ENCODE measurements at regions of chr19 and their contacts with region 1.

Region 1: GRCh38 chr19:46990991-46991676 is 28.5 kb upstream of the NPAS1 start:
- DNase-seq: peak; percentile 88
- H3K4me3 Mint-ChIP-seq: no peak overlapping the region
- H3K27ac Mint-ChIP-seq: peak overlapping the region; percentile 19
- H3K4me1 Mint-ChIP-seq: no peaks in the 10 kb centered on the region
- H3K27me3 Mint-ChIP-seq: no peaks in the 10 kb centered on the region
- CTCF ChIP-seq: peak; percentile 89

Region 2: GRCh38 chr19:46753420-46754155 is 237.5 kb before region 1 on chr19:
- CTCF ChIA-PET with region 1: interaction called, 5 read pairs
- POLR2A ChIA-PET with region 1: no interaction called
- intact Hi-C with region 1: loop called (anchors 2 kb)
- DNase-seq: peak; percentile 69
- H3K4me3 Mint-ChIP-seq: no peak overlapping the region
- H3K27ac Mint-ChIP-seq: no peak overlapping the region
- H3K4me1 Mint-ChIP-seq: peaks cover 11% of the 10 kb centered on the region
- H3K27me3 Mint-ChIP-seq: no peaks in the 10 kb centered on the region
- CTCF ChIP-seq: no peak

Region 3: DNA sequence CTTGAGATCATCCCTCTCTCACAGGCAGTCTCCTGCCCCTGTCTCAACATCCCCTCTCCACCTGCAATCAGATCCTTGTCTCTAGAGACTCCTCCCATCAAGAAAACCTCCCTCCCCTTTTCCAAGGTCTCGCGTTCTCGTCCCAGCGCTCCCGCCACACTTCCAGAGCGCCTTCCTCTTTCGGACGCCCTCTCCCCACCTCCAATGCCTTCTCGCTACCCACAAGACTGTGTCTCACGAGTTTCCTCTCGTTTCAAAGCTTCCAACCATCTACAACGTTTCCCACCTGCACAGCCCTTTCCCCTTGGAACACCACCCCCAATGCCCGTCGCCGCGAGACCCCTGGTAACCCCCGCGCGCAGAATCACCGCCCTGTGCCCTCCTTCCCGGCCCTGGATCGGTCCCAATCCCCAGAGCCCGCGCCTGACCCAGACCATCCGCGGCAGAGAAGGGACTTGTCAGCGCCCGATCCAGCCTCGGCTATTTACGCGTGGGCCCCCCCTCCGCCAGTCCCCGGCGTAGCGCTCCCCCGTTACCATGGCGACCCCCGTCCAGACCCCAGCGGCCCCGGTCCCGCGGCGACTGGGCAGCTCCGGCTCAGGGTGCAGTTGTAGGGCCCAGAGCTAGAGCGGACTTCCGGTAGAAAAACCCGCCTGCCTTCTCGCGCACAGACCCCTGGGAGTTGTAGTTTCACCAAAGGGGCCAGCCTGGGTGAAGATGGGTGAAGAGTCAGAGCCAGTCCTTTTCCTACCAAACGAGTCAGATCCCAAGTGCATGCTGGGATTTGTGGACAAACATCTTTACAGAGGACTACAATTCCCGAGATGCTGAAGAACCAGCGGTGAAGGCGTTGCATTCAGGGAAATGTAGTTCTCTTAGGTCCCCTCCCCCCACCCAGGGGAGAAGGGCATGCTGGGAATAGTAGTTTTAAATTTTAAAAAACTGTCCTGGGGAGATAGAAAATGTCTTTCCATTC is 140.6 kb before region 1 on chr19 and contains the start of gene AP2S1:
- CTCF ChIA-PET with region 1: interaction called, 67 read pairs
- POLR2A ChIA-PET with region 1: interaction called, 3 read pairs
- intact Hi-C with region 1: no loop called
- DNase-seq: peak; percentile 99
- H3K4me3 Mint-ChIP-seq: peak within 1 kb of the TSS; percentile 98
- H3K27ac Mint-ChIP-seq: peak within 1 kb of the TSS; percentile 95
- H3K4me1 Mint-ChIP-seq: peaks cover 16% of the 10 kb centered on the region
- H3K27me3 Mint-ChIP-seq: no peaks in the 10 kb centered on the region
- CTCF ChIP-seq: no peak
- total RNA-seq, gene AP2S1: 237 and 252 TPM in 2 replicates

Region 4: GRCh38 chr19:46890423-46891170 is 100.5 kb before region 1 on chr19:
- CTCF ChIA-PET with region 1: interaction called, 12 read pairs
- POLR2A ChIA-PET with region 1: no interaction called
- intact Hi-C with region 1: no loop called
- DNase-seq: peak; percentile 41
- H3K4me3 Mint-ChIP-seq: no peak overlapping the region
- H3K27ac Mint-ChIP-seq: peak overlapping the region; percentile 57
- H3K4me1 Mint-ChIP-seq: peaks cover 45% of the 10 kb centered on the region
- H3K27me3 Mint-ChIP-seq: no peaks in the 10 kb centered on the region
- CTCF ChIP-seq: no peak

Region 5: GRCh38 chr19:46944918-46945628 is 46.1 kb before region 1 on chr19:
- CTCF ChIA-PET with region 1: interaction called, 13 read pairs
- POLR2A ChIA-PET with region 1: no interaction called
- intact Hi-C with region 1: no loop called
- DNase-seq: no peak
- H3K4me3 Mint-ChIP-seq: no peak overlapping the region
- H3K27ac Mint-ChIP-seq: no peak overlapping the region
- H3K4me1 Mint-ChIP-seq: peaks cover under 1% of the 10 kb centered on the region
- H3K27me3 Mint-ChIP-seq: no peaks in the 10 kb centered on the region
- CTCF ChIP-seq: no peak

Region 6: GRCh38 chr19:47002107-47002766 is 11.1 kb after region 1 on chr19:
- CTCF ChIA-PET with region 1: interaction called, 10 read pairs
- POLR2A ChIA-PET with region 1: interaction called, 3 read pairs
- intact Hi-C with region 1: no loop called
- DNase-seq: no peak
- H3K4me3 Mint-ChIP-seq: no peak overlapping the region
- H3K27ac Mint-ChIP-seq: no peak overlapping the region
- H3K4me1 Mint-ChIP-seq: no peaks in the 10 kb centered on the region
- H3K27me3 Mint-ChIP-seq: no peaks in the 10 kb centered on the region
- CTCF ChIP-seq: no peak